Thyroid gland (tissue), 4 donors: ENCODE measurements at regions of chr5 and their contacts with region 1.

Region 1: GRCh38 chr5:134533115-134533815 is 7.8 kb downstream of the JADE2 start:
- DNase-seq: no peak
- H3K4me3 ChIP-seq: no peak overlapping the region
- H3K27ac ChIP-seq: peak overlapping the region in 2 of 3 donors; percentile 23 to 48
- H3K4me1 ChIP-seq: peaks cover 27 to 54% of the 10 kb centered on the region in 2 donors
- H3K27me3 ChIP-seq: no peaks in the 10 kb centered on the region
- CTCF ChIP-seq: no peak
- POLR2A ChIP-seq: no peak

Region 2: GRCh38 chr5:134568761-134569695 is 35.8 kb after region 1 on chr5:
- intact Hi-C with region 1: loop called (anchors 5 kb)
- DNase-seq: peak; percentile 94 to 97
- H3K4me3 ChIP-seq: no peak overlapping the region
- H3K27ac ChIP-seq: peak overlapping the region; percentile 53 to 85 (median 58)
- H3K4me1 ChIP-seq: peaks cover 19 to 43% of the 10 kb centered on the region in 2 donors
- H3K27me3 ChIP-seq: no peaks in the 10 kb centered on the region
- CTCF ChIP-seq: no peak
- POLR2A ChIP-seq: no peak